Right ventricle myocardium superior (tissue), 1 donor: ENCODE measurements at regions of chr1 and their contacts with region 1.

Region 1: DNA sequence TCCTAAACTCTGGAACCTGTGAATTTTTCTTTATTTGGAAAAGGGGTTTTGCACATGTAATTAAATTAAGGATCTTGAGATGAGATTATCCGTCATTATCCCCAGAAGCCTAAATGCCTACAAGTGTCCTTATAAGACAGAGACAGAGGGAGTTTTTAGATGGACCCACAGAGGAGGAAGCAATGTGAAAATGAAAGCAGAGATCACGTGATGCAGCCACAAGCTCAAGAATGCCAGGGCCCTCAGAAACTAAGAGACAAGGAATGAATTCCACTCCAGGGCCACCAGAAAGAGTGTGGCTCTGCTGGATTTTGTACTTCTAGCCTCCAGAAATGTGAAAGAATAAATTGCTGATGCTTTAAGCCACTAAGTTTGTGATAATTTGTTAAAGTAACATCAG is 183.6 kb upstream of the UBE2U start:
- DNase-seq: no peak
- ATAC-seq: peak; percentile 85

Region 2: DNA sequence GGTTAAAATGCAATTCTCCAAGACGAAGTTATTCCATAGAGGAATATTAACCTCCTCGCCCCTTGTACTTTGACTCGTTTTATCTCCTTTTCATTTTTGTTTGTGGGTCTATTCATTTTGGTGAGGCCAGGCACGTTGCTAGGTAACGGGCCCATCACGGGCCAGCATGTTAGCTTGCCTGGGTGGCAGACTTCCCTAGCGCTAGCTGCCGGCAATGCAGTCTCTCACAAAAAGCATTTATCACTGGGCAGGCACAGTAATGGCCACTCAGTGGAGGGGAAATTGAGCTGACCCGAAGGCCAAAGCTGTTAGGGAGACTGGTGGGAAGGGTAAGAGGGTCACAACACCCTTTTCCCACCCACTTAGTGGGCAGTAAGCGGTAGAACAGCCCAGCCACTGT is 931.9 kb before region 1 on chr1:
- intact Hi-C with region 1: loop called (anchors 10 kb)
- DNase-seq: no peak
- ATAC-seq: no peak

Region 3: DNA sequence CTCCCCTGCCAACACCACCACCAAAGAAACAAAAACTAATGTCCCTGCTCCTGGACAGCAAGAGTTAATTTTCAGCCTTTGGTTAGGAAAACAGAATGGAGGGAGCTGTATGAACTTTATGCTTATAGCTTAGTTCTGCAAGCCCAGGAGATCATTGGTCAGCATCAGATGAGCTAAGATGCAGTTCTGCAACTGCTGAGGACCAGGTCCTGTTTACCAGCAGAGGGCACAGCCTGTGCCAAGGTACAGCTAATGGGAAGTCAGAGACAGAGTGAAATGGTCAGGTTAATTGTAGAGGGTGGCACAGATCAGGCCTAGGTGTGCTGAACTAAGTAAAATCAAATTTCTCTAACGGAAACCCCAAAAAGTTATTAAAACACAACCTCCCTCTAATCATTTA is 84.7 kb before region 1 on chr1:
- intact Hi-C with region 1: no loop called
- DNase-seq: no peak
- ATAC-seq: peak; percentile 80